ENCODE measurements at regions of chr12 and their contacts with region 1.

Region 1: GRCh38 chr12:59149997-59150642 is 229.8 kb upstream of the LRIG3 start:
- DNase-seq: peak in 2 of 4 donors; percentile 56 to 82
- ATAC-seq: peak; percentile 99
- H3K4me3 ChIP-seq: no peak overlapping the region
- H3K27ac ChIP-seq: no peak overlapping the region
- H3K4me1 ChIP-seq: no peaks in the 10 kb centered on the region
- H3K27me3 ChIP-seq: no peaks in the 10 kb centered on the region
- CTCF ChIP-seq: peak; percentile 61 to 94

Region 2: DNA sequence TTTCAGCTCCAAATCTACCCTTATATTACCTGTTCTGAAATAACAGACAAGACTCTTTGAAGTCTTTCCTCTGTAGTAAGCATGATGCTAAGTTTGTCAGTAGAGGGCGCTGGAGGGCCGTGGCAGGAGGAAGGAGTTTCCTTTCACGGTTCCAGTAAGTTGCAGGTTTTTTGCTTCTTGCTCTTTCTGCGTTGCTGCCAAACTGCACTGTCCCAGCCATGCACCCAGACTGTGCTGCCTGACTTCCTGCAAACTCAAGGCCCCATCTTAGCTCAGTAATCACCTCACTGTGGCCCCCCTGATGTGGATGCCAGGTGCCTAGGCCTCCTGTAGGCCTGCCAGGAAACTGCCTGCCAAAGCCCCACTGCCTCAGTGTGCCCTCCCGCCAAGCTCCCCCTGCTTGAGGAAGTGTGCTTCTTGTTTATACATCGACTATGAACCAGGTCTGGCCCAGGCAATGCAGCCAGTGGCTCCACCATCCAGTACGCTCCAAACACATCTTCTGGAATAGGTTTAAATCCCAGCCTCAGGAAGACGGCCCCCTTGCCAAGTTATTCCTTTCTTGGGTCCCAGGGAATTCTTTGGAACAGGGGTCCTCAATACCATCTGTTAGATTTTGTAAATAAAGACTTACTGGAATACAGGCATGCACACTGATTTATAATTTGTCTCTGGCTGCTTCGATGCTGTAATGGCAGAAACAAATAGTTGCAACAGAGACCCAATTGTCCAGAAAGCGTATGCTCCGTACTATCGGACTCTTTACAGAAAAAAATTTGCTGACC is 36.1 kb before region 1 on chr12:
- intact Hi-C with region 1: loop called in 1 of 2 experiments (anchors 5 kb)
- DNase-seq: peak; percentile 62 to 86 (median 64)
- ATAC-seq: peak; percentile 94
- H3K4me3 ChIP-seq: no peak overlapping the region
- H3K27ac ChIP-seq: no peak overlapping the region
- H3K4me1 ChIP-seq: no peaks in the 10 kb centered on the region
- H3K27me3 ChIP-seq: no peaks in the 10 kb centered on the region
- CTCF ChIP-seq: peak; percentile 48 to 76

Region 3: GRCh38 chr12:59230334-59230733 is 80.2 kb after region 1 on chr12:
- intact Hi-C with region 1: no loop called
- DNase-seq: no peak
- ATAC-seq: no peak
- H3K4me3 ChIP-seq: no peak overlapping the region
- H3K27ac ChIP-seq: no peak overlapping the region
- H3K4me1 ChIP-seq: no peaks in the 10 kb centered on the region
- H3K27me3 ChIP-seq: no peaks in the 10 kb centered on the region
- CTCF ChIP-seq: no peak

Measured in left lung (tissue), 14 donors.